Left ventricle myocardium inferior (tissue), 1 donor: ENCODE measurements at regions of chr20 and their contacts with region 1.

Region 1: GRCh38 chr20:49384437-49385088 is 97.9 kb downstream of the KCNB1 start:
- DNase-seq: peak; percentile 70
- H3K4me3 ChIP-seq: no peak overlapping the region
- H3K27ac ChIP-seq: no peak overlapping the region
- H3K4me1 ChIP-seq: peaks cover 52% of the 10 kb centered on the region
- H3K27me3 ChIP-seq: no peaks in the 10 kb centered on the region
- CTCF ChIP-seq: peak; percentile 74

Region 2: GRCh38 chr20:48738399-48739304 is 645.9 kb before region 1 on chr20:
- intact Hi-C with region 1: no loop called
- DNase-seq: no peak
- H3K4me3 ChIP-seq: no peak overlapping the region
- H3K27ac ChIP-seq: peak overlapping the region; percentile 12
- H3K4me1 ChIP-seq: peaks cover 39% of the 10 kb centered on the region
- H3K27me3 ChIP-seq: no peaks in the 10 kb centered on the region
- CTCF ChIP-seq: no peak

Region 3: DNA sequence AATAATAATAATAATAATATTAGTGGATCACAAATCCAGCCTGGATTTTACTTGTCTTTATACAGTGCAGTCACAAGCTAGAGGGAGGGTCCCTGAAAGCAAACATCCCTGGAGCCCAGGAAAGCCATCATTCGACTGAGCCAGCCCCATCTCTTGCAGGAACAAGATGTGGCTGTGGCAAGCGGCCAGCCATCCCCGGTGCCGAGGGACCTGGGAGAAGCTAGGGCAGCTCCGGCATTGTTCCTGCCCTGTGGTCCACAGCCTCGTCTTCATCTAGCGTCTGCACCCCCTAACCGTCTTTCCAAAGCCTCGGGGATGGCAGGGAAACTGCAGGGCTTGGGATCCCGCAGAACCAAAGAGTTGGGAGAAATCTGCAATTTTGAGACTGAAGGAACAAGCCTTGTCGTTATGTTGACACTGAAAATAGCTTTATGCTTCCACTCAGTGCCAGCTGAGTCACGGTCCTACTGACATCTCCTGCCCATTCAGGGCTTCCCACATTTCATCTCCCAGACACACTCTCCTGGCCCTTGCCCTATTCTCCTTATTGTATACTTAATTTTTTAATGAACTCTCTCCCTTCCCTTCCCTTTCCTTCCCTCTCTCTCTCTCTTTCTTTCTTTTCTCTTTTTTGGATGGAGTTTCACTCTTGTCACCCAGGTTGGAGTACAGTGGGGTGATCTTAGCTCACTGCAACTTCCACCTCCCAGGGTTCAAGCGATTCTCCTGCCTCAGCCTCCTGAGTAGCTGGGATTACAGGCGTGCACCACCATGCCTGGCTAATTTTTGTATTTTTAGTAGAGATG is 44.2 kb before region 1 on chr20:
- intact Hi-C with region 1: no loop called
- DNase-seq: peak; percentile 21
- H3K4me3 ChIP-seq: no peak overlapping the region
- H3K27ac ChIP-seq: no peak overlapping the region
- H3K4me1 ChIP-seq: peaks cover 8% of the 10 kb centered on the region
- H3K27me3 ChIP-seq: peaks cover 24% of the 10 kb centered on the region
- CTCF ChIP-seq: no peak

Region 4: DNA sequence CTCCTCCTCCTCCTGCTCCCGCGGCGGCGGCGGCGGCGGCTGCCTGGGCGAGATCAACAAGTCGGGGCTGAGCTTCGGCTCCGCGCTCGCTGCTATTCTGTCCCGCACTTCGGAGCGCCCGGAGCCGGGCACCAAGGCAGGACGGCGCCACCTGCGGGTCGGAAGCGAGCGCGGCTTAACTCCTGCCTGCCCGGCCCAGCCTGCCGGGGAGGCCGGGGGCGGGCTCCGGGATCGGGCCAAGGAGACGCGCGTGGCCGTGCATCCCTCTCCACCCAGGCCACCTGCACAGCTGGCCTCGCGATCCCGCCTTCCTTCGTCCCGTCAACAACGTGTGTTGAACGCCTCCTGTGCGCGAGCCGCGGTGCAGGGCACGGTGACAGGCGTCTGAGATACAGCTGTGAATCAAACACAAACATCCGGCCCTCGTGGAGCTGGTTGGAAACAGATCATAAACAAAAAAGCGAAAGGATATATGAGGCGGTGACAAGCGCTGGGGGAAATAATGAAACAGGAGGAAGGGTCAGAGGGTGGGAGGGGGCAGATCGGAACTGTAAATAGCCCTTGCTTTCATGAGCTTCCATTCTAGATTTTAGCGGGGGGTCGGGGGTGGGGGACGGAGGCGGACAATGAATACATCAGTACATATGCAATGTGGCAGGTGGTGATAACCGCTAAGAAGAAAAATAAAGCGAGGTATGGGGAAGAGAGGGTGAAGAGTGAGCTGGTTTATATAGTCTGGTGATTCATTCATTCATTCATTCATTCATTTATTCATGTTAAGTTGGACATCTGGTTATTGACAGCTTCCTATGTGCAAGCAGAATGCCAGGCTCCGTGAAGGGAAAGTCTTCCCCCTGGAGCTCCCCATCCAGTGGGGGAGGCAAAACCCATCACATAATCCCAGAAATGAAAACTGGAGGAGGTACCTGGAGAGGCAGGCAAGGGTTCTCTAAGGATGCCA is 99.9 kb after region 1 on chr20:
- intact Hi-C with region 1: loop called (anchors 10 kb)
- DNase-seq: peak; percentile 78
- H3K4me3 ChIP-seq: peak overlapping the region; percentile 67
- H3K27ac ChIP-seq: no peak overlapping the region
- H3K4me1 ChIP-seq: peaks cover 26% of the 10 kb centered on the region
- H3K27me3 ChIP-seq: peaks cover 78% of the 10 kb centered on the region
- CTCF ChIP-seq: peak; percentile 84

Region 5: GRCh38 chr20:49635166-49635565 is 250.6 kb after region 1 on chr20:
- intact Hi-C with region 1: no loop called
- DNase-seq: peak; percentile 46
- H3K4me3 ChIP-seq: no peak overlapping the region
- H3K27ac ChIP-seq: peak overlapping the region; percentile 79
- H3K4me1 ChIP-seq: peaks cover 45% of the 10 kb centered on the region
- H3K27me3 ChIP-seq: no peaks in the 10 kb centered on the region
- CTCF ChIP-seq: no peak